ENCODE measurements at regions of chr1 and their contacts with region 1.

Region 1: DNA sequence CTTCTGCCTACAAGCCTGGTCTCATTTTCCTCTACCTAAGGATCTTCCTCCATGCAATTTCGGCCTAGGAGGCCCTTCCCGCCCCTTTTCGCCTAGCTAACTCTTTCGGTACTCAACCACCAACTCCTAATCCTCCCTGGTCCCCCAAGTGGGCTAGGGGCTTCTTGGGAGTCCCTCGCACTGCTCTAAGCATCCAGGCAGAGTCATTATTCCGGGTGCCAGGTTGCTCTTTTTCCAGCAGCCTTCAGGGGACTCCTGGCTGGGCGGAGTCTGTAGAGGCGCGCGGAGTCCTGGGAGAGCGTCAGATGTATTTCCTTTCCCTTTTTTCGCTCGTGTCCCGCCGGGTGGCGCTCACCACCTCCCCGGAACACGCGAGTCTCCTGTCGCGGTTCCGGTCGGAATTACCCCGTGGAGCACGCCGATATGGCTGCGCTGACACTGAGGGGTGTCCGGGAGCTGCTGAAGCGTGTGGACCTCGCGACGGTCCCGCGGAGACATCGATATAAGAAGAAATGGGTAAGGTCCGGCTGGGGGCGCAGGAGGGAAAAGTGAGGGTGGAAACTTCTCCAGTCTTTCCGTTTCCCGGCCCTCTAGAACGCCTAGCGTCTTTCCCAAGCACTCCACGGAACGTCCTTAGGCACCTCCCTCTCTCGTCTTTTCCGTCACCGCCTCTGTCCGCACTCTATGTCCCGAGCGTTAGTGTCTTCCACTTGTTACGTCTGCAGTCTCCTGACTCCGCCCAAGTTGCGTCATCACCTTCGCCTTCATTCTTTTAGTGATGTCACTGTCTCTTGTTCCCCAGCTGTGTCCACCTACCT is at the start of gene NSUN4:
- DNase-seq: peak; percentile 96
- ATAC-seq: peak; percentile 97
- H3K4me3 ChIP-seq: peak within 1 kb of the TSS; percentile 38 to 55
- H3K27ac ChIP-seq: peak within 1 kb of the TSS; percentile 93 to 94
- H3K4me1 ChIP-seq: no peaks in the 10 kb centered on the region
- H3K27me3 ChIP-seq: no peaks in the 10 kb centered on the region
- total RNA-seq, gene NSUN4: 21.2 to 26.3 TPM

Region 2: DNA sequence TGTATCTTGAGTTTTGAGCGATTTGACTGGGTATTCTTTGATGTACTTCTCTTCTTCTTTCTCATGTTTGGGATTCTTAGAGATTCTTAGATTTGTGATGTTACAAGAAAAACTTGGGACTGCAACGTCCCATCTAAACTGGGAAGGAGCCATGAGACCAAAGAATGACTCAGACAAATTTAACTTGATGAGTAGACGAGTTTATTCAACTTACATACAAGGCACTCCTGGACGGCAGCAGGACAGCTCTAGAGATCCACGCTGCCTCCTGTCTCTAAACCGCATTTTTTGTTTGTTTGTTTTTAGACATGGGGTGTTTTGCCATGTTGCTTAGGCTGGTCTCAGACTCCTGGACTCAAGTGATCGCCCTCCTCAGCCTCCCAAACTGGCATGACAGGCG is 345.3 kb before region 1 on chr1:
- intact Hi-C with region 1: no loop called
- DNase-seq: no peak
- ATAC-seq: no peak
- H3K4me3 ChIP-seq: no peak overlapping the region
- H3K27ac ChIP-seq: no peak overlapping the region
- H3K4me1 ChIP-seq: no peaks in the 10 kb centered on the region
- H3K27me3 ChIP-seq: no peaks in the 10 kb centered on the region

Region 3: DNA sequence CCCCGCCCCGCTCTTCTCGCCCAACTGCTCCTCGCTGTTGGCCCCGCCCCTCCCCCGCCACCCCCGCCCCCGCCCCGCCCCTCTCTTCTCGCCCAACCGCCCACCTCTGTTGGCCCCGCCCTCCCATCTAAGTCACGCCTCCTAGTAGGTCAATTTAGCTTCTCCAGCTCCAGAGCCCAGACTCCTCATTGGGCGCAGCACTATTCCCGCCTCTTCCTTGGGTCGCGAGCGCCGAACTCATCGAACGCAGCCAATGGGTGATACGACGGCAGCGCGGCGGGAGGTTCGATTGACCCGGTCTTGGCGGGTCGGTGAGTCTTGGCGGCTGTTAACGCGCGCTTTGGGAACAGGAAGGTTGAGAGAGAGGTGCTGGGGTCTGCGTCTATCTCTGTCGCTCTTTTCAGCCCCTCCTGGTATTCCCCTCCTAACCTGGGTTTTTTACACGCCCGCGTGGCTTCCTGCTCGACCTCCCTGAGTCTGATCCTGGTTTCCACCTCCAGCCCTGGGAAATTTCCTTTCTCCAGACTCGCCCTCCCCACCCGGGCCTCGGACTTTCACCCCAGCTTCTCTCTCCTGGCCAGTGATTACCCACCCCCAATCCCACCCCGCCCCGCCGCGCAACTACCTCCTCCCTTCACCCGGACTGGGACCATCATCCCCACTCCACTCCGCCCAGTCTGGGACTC is 93.0 kb before region 1 on chr1 and contains the start of gene RAD54L:
- intact Hi-C with region 1: loop called (anchors 5 kb)
- DNase-seq: peak; percentile 98 to 99
- ATAC-seq: peak; percentile 98
- H3K4me3 ChIP-seq: peak within 1 kb of the TSS; percentile 52 to 97
- H3K27ac ChIP-seq: peak within 1 kb of the TSS in 1 of 2 donors; percentile 30
- H3K4me1 ChIP-seq: no peaks in the 10 kb centered on the region
- H3K27me3 ChIP-seq: no peaks in the 10 kb centered on the region
- total RNA-seq, gene RAD54L: 1.6 to 2.3 TPM

Region 4: DNA sequence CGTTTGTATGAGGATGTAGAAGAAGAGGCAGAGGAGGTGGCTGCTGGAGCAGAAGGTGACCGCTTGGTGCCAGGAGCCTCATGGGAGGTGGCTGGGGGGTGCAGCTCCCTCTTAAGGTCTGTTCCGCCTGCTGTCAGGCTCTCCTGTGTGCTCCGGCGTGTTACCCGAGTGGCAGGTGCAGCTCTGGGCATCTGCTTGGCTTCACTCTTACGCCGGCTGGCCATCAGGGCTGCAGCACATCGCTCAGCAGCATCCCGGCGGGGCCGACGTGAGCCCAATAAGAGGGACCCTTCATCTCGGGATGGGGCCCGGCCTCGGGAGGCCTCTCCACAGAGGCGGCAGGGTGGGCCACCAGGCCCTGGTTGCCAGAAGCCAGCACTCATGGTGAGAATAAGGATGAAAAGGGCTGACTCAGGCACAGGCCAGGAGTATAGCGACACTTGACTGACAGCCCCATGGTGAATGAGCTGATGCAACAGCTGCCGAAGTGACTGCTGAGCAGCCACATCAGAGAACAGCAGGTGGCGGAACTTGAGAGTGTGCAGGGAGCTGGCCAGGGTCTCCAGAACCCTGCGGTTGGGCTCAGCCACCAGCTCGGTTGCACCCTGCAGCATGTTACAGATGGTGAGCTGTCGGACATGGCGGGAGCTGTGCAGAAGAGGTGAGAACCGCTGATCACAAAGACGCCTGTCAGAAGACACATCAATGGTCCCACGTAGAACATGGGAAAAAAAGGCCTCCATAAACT is 54.7 kb before region 1 on chr1:
- intact Hi-C with region 1: no loop called
- DNase-seq: no peak
- ATAC-seq: peak; percentile 15
- H3K4me3 ChIP-seq: no peak overlapping the region
- H3K27ac ChIP-seq: no peak overlapping the region
- H3K4me1 ChIP-seq: no peaks in the 10 kb centered on the region
- H3K27me3 ChIP-seq: no peaks in the 10 kb centered on the region

Region 5: GRCh38 chr1:46303038-46303871 is 37.4 kb before region 1 on chr1 and contains the starts of genes LRRC41 and UQCRH:
- intact Hi-C with region 1: loop called (anchors 1 to 5 kb)
- DNase-seq: peak; percentile 96 to 98
- ATAC-seq: peak; percentile 96
- H3K4me3 ChIP-seq: peak within 1 kb of the TSS; percentile 83 to 86
- H3K27ac ChIP-seq: peak within 1 kb of the TSS; percentile 87 to 93
- H3K4me1 ChIP-seq: no peaks in the 10 kb centered on the region
- H3K27me3 ChIP-seq: no peaks in the 10 kb centered on the region
- total RNA-seq, gene LRRC41: 48.5 to 49.1 TPM
- total RNA-seq, gene UQCRH: 100 to 134 TPM